Activated CD4-positive, alpha-beta memory T cell treated with anti-CD3 and anti-CD28 coated beads, Interleukin-2, amount 10 ng/mL, durations not matched to agents 7 days and 5 days (primary cell): ENCODE measurements at regions of chr20 and their contacts with region 1.

Region 1: DNA sequence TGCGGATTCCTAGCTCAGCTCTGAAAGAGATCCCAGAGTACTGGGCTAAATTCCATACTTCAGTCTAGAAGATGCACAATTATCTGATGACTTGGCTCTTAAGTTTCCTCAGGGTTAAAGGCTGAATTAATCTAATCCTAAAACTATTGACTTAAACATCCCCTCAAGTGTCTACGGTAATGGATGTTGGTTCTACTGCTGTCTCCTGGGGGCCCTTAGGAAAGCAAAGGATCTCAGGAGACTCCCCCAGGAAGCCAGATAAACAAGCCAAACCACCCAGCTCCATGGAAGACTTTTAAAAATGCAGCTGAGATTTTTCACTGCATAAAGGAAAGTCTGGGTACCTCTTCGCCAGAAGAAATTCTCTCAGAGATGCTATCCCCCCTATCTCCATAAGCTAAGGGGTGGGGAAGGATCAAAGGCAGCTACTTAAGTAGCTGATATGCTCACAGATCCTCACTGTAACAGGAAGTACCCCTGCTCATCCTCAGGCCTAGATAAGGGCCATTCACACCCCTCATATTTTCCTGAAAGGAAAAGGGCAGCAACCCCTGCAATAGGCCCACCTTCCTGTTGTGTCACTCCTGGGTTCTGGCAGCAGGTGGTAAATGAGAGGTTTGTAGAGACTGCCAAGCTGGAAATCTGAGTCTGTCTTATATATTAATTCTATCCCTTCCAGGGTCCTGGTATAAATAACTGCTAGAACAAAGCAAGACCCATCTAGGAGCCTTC is 9.3 kb downstream of the NDRG3 start:
- DNase-seq: no peak
- H3K4me3 Mint-ChIP-seq: no peak overlapping the region
- H3K27ac Mint-ChIP-seq: no peak overlapping the region
- H3K4me1 Mint-ChIP-seq: peaks cover 30% of the 10 kb centered on the region
- H3K27me3 Mint-ChIP-seq: no peaks in the 10 kb centered on the region

Region 2: GRCh38 chr20:36773597-36774390 is 37.2 kb after region 1 on chr20 and contains the start of gene DSN1:
- CTCF ChIA-PET with region 1: interaction called, 11 read pairs
- POLR2A ChIA-PET with region 1: interaction called, 6 read pairs
- DNase-seq: peak; percentile 99
- H3K4me3 Mint-ChIP-seq: peak within 1 kb of the TSS; percentile 91
- H3K27ac Mint-ChIP-seq: peak within 1 kb of the TSS; percentile 85
- H3K4me1 Mint-ChIP-seq: peaks cover 42% of the 10 kb centered on the region
- H3K27me3 Mint-ChIP-seq: peaks cover 2% of the 10 kb centered on the region
- total RNA-seq, gene DSN1: 31.9 to 32.0 TPM